ENCODE measurements at regions of chr1 and their contacts with region 1.

Region 1: GRCh38 chr1:42949312-42950145 is 9.1 kb downstream of the SLC2A1 start:
- DNase-seq: peak; percentile 56 to 69
- H3K4me3 ChIP-seq: peak overlapping the region; percentile 24; the same call in 1 of the 2 replicates
- H3K27ac ChIP-seq: peak overlapping the region; percentile 64
- H3K4me1 ChIP-seq: peaks cover 95% of the 10 kb centered on the region
- H3K27me3 ChIP-seq: no peaks in the 10 kb centered on the region
- CTCF ChIP-seq: no peak

Region 2: DNA sequence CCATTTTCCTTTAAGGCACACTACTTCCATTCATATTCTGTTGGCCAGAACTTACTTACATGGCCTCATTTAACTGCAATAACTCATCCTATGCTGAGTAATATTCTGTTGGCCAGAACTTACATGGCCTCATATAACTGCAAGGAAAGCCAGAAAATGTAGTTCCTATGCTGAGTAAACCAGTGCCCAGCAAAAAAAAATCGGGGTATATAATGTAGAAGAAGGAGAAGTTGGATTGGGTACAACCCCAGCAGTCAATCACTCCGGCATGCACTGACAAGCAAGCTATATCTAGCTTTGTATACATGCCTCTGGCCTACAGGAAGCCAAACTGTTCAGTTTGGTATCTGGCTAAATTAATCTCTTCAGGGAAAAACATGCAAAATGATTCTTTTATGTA is 330.7 kb before region 1 on chr1:
- CTCF ChIA-PET with region 1: no interaction called
- POLR2A ChIA-PET with region 1: no interaction called
- intact Hi-C with region 1: no loop called
- DNase-seq: no peak
- H3K4me3 ChIP-seq: no peak overlapping the region
- H3K27ac ChIP-seq: no peak overlapping the region
- H3K4me1 ChIP-seq: no peaks in the 10 kb centered on the region
- H3K27me3 ChIP-seq: no peaks in the 10 kb centered on the region; the same call in 1 of the 2 replicates
- CTCF ChIP-seq: no peak

Region 3: GRCh38 chr1:43188106-43188505 is 238.6 kb after region 1 on chr1:
- CTCF ChIA-PET with region 1: no interaction called
- POLR2A ChIA-PET with region 1: interaction called, 39 read pairs
- intact Hi-C with region 1: no loop called
- DNase-seq: no peak
- H3K4me3 ChIP-seq: no peak overlapping the region
- H3K27ac ChIP-seq: no peak overlapping the region
- H3K4me1 ChIP-seq: no peaks in the 10 kb centered on the region
- H3K27me3 ChIP-seq: no peaks in the 10 kb centered on the region
- CTCF ChIP-seq: no peak